ENCODE measurements at regions of chr7 and their contacts with region 1.

Region 1: DNA sequence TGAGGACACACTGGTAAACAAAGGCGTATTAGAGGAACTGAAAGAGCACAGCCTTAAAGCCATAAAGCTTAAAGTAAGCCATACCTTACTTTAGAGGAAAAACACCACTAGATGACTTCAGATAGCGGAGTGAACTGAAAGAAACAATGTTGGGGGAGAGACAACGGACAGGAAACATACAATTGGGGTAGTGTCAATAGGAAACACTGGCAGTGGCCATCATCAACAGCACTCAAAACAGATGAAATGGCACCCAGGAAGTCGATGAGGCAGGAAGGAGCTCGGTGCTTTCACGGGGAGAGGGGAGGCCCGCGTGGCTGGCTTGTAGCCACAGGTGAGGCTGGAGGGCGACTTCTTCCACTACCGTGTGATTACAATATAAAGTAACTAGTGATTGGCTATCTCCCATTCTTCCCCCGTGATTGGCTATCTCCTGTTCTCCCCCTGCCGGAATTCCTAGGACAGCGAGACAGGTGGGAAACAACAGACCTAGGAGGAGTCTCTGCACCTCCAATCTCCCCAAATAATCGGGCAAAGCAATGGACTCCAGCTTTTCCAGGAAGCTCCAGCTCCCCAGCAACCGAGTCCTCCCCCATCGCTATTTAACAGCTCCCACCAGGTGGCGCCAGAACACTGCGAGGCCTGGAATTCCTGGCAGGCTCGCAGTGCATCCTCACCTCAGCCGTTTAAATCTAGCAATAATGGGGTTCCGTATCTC is 2.4 kb upstream of the TAS2R38 start:
- DNase-seq: peak; percentile 7
- ATAC-seq: peak; percentile 93
- H3K4me3 ChIP-seq: 0 out of 2 replicates have a peak overlapping the region, but pooled peaks have one; percentile 36
- H3K27ac ChIP-seq: no peak overlapping the region
- H3K4me1 ChIP-seq: no peaks in the 10 kb centered on the region
- H3K27me3 ChIP-seq: no peaks in the 10 kb centered on the region
- CTCF ChIP-seq: peak; percentile 81 to 92 (median 88)
- EP300 ChIP-seq: no peak
- POLR2A ChIP-seq: 0 out of 2 replicates have a peak, but pooled peaks have one; percentile 30
- RAD21 ChIP-seq: peak; percentile 82

Region 2: GRCh38 chr7:141960687-141961422 is 15.1 kb before region 1 on chr7:
- CTCF ChIA-PET with region 1: interaction called, 32 read pairs
- POLR2A ChIA-PET with region 1: no interaction called
- RAD21 ChIA-PET with region 1: no interaction called
- SMC1A ChIA-PET with region 1: interaction called, 4 read pairs
- in situ Hi-C with region 1: no loop called
- intact Hi-C with region 1: no loop called
- DNase-seq: no peak
- ATAC-seq: peak; percentile 84
- H3K4me3 ChIP-seq: no peak overlapping the region
- H3K27ac ChIP-seq: no peak overlapping the region
- H3K4me1 ChIP-seq: no peaks in the 10 kb centered on the region
- H3K27me3 ChIP-seq: no peaks in the 10 kb centered on the region
- CTCF ChIP-seq: no peak
- EP300 ChIP-seq: no peak
- POLR2A ChIP-seq: no peak
- RAD21 ChIP-seq: no peak

Region 3: GRCh38 chr7:142188846-142189245 is 212.9 kb after region 1 on chr7:
- CTCF ChIA-PET with region 1: interaction called, 11 read pairs
- POLR2A ChIA-PET with region 1: no interaction called
- RAD21 ChIA-PET with region 1: no interaction called
- SMC1A ChIA-PET with region 1: interaction called, 11 read pairs
- in situ Hi-C with region 1: no loop called
- intact Hi-C with region 1: loop called (anchors 1 kb)
- DNase-seq: no peak
- ATAC-seq: no peak
- H3K4me3 ChIP-seq: no peak overlapping the region
- H3K27ac ChIP-seq: no peak overlapping the region
- H3K4me1 ChIP-seq: no peaks in the 10 kb centered on the region
- H3K27me3 ChIP-seq: no peaks in the 10 kb centered on the region
- CTCF ChIP-seq: peak in 1 of 3 experiments; percentile 25; a peak in 1 of 6 replicates
- EP300 ChIP-seq: no peak
- POLR2A ChIP-seq: no peak
- RAD21 ChIP-seq: peak; percentile 40

Region 4: DNA sequence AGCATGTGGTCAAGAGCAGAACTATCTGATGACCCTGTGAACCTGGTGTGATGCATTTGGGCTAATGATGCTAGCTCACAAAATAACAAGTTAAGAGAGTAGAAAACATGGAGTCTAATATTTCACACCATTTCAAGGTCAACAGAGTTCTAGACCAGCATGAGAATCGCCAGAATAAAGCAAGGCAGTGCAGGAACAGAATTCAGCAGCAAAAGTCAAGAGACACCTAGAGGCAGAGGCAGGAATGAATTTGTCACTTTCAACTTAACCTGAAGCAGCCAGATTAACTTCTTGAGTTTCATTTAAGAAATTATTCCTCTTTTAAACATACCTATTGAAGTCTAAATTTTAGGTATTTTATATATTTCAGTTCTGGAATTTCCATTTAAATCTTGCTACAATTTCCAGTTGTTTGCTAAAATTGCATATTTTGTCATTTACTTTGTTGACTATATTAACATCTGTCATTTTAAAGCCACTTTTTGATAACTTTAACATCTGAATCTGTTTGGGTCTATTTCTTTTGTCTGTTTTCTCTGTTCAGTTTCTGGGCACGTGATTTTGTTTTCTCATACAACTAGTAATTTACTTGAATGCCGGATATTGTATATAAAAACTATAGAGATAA is 326.1 kb after region 1 on chr7:
- CTCF ChIA-PET with region 1: interaction called, 40 read pairs
- POLR2A ChIA-PET with region 1: no interaction called
- RAD21 ChIA-PET with region 1: no interaction called
- SMC1A ChIA-PET with region 1: interaction called, 3 read pairs
- in situ Hi-C with region 1: loop called (anchors 10 kb)
- intact Hi-C with region 1: loop called (anchors 1 kb)
- DNase-seq: no peak
- ATAC-seq: peak; percentile 75
- H3K4me3 ChIP-seq: no peak overlapping the region
- H3K27ac ChIP-seq: no peak overlapping the region
- H3K4me1 ChIP-seq: no peaks in the 10 kb centered on the region
- H3K27me3 ChIP-seq: no peaks in the 10 kb centered on the region; a peak in 1 of 4 replicates
- CTCF ChIP-seq: peak; percentile 51 to 65 (median 63)
- EP300 ChIP-seq: no peak
- POLR2A ChIP-seq: no peak
- RAD21 ChIP-seq: peak; percentile 33